ENCODE measurements at regions of chr4 and their contacts with region 1.

Region 1: GRCh38 chr4:98995183-98996055 is at the start of gene METAP1:
- DNase-seq: peak; percentile 94
- H3K4me3 ChIP-seq: peak within 1 kb of the TSS; percentile 91
- H3K27ac ChIP-seq: peak within 1 kb of the TSS; percentile 87
- H3K4me1 ChIP-seq: peaks cover 4% of the 10 kb centered on the region
- H3K27me3 ChIP-seq: no peaks in the 10 kb centered on the region
- CTCF ChIP-seq: peak; percentile 43
- total RNA-seq, gene METAP1: 66.2 to 69.3 TPM

Region 2: GRCh38 chr4:99054428-99054994 is 59.1 kb after region 1 on chr4:
- intact Hi-C with region 1: loop called (anchors 5 kb)
- DNase-seq: no peak
- H3K4me3 ChIP-seq: no peak overlapping the region
- H3K27ac ChIP-seq: no peak overlapping the region
- H3K4me1 ChIP-seq: no peaks in the 10 kb centered on the region
- H3K27me3 ChIP-seq: no peaks in the 10 kb centered on the region
- CTCF ChIP-seq: no peak

Region 3: DNA sequence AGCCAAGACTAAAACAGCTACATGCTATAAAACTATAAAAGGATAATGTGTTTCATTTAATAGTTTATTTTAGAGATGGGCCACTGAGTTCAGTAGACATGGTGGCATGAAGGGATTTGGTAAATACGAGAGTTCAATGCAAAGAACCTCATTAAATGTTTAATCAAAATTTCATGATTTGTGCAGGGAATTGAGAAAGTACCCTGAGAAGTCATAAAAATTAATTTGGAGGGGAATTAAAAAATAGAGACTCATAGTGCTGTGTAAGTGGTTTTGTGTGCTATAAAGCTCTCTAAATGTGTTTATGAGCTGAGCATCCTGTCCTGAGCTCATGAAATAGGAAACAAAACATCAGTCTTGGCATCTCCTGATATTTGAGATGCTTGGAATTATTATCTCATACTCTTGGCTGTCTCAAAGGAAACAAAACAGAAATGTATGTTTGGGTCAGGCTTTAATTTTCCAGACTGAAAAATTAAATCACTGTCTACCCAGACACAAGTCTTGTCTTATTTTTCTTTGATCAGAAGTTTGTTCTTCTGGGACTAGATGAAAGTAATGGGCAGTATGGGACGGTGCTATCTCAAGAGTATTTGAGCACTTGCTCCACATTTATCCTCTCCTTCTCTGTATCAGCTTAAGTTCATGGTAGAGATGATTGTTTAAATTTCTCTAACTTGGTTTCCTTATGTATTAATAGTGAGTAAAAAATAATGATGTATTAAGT is 1560.4 kb after region 1 on chr4:
- intact Hi-C with region 1: no loop called
- DNase-seq: no peak
- H3K4me3 ChIP-seq: no peak overlapping the region
- H3K27ac ChIP-seq: no peak overlapping the region
- H3K4me1 ChIP-seq: no peaks in the 10 kb centered on the region
- H3K27me3 ChIP-seq: no peaks in the 10 kb centered on the region
- CTCF ChIP-seq: no peak